Transverse colon (tissue), 4 donors: ENCODE measurements at regions of chr12 and their contacts with region 1.

Region 1: DNA sequence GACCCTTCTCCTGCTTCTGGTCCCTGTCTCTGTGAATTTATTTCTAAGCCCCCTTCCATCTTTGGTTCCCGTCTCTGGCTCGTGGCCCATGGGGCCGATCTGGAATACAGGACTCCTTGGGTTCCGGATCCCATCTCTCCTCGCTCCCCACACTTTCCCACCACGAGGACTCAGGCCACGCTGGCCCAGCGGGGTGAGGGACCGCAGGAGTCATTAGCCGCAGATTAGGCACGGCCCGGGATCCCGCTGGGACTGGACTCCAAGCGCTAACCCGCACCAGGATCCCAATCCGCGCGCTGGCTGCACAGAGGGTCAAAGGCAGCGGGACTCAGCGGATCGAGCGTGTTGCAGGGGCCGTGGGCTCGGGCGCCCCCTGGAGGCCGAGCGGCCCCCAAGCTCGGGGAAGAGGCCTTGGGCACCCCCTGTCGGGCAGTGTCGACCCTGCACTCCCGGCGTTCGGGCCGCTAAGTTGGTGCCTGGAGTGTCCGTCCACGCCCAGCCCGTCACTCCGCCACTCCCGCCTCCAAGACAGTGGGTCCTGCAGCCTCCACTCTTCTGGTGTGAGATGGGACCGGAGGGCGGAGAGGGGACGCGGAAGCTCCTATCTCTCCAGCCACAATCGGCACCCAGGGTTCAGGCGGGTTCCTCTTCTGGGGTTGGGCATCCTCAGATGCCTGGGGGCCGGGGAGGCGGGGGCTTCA is 9.5 kb downstream of the SHMT2 start:
- DNase-seq: peak; percentile 90
- H3K4me3 ChIP-seq: peak overlapping the region; percentile 11 to 50 (median 21)
- H3K27ac ChIP-seq: peak overlapping the region in 2 of 4 donors; percentile 6 to 51
- H3K4me1 ChIP-seq: peaks cover 40 to 63% (median 59%) of the 10 kb centered on the region in 4 donors
- H3K27me3 ChIP-seq: peaks cover 88% of the 10 kb centered on the region
- CTCF ChIP-seq: peak; percentile 100
- EP300 ChIP-seq: no peak
- POLR2A ChIP-seq: no peak

Region 2: GRCh38 chr12:56541631-56542030 is 697.4 kb before region 1 on chr12:
- in situ Hi-C with region 1: no loop called
- intact Hi-C with region 1: no loop called
- DNase-seq: no peak
- H3K4me3 ChIP-seq: no peak overlapping the region
- H3K27ac ChIP-seq: no peak overlapping the region
- H3K4me1 ChIP-seq: peaks cover 0 to 3% (median 1%) of the 10 kb centered on the region in 4 donors
- H3K27me3 ChIP-seq: no peaks in the 10 kb centered on the region
- CTCF ChIP-seq: no peak
- EP300 ChIP-seq: no peak
- POLR2A ChIP-seq: no peak

Region 3: DNA sequence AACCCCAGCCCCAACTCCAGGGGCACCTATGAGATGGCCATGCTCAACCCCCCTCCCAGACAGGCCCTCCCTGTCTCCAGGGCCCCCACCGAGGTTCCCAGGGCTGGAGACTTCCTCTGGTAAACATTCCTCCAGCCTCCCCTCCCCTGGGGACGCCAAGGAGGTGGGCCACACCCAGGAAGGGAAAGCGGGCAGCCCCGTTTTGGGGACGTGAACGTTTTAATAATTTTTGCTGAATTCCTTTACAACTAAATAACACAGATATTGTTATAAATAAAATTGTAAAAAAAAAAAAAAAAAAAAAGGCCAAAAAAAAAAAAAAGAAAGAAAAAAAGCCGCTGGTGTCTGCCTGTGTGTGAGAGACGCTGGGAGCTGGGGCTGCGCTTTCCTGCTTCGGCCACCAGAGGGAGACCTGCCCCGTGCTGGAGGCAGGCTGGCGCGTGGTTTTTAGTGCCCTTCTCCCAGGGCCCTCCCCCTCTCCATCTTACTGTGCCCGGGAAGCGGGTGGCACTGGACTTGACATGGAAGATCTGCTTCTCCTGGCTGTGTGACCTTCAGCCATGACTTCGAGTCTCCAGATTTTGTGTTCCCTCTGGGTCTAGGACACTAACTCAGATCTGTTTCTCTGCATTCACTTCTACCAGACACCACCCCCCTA is 25.8 kb before region 1 on chr12:
- in situ Hi-C with region 1: no loop called
- intact Hi-C with region 1: loop called (anchors 1 kb)
- DNase-seq: peak; percentile 88
- H3K4me3 ChIP-seq: no peak overlapping the region
- H3K27ac ChIP-seq: peak overlapping the region in 1 of 4 donors; percentile 8
- H3K4me1 ChIP-seq: peaks cover 16 to 27% (median 18%) of the 10 kb centered on the region in 4 donors
- H3K27me3 ChIP-seq: peaks cover 37% of the 10 kb centered on the region
- CTCF ChIP-seq: peak; percentile 92 to 95 (median 93)
- EP300 ChIP-seq: no peak
- POLR2A ChIP-seq: no peak

Region 4: DNA sequence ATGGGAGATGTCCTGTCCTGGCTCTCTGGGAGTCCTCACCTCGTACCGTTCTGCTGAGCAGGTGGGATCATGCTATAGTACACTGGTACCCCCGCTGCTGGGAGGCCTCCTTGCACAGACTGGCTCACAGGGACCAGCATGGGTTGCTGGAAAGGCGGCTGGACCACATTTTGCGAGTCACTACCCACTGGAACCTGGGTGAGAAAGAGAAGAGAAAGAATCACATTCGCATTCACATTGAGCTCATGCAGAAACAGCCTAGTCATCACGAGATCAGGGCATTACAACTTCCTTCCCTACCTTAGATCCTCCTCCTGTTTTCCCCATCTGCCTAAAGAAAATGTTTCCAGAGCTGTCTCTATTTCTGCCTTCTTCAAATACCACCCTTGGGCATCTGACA is 29.3 kb after region 1 on chr12:
- in situ Hi-C with region 1: no loop called
- intact Hi-C with region 1: loop called (anchors 1 kb)
- DNase-seq: no peak
- H3K4me3 ChIP-seq: no peak overlapping the region
- H3K27ac ChIP-seq: no peak overlapping the region
- H3K4me1 ChIP-seq: no peaks in the 10 kb centered on the region
- H3K27me3 ChIP-seq: no peaks in the 10 kb centered on the region
- CTCF ChIP-seq: no peak
- EP300 ChIP-seq: no peak
- POLR2A ChIP-seq: no peak